Activated CD8-positive, alpha-beta T cell treated with anti-CD3 and anti-CD28 coated beads for 36 hours (primary cell): ENCODE measurements at regions of chr1 and their contacts with region 1.

Region 1: DNA sequence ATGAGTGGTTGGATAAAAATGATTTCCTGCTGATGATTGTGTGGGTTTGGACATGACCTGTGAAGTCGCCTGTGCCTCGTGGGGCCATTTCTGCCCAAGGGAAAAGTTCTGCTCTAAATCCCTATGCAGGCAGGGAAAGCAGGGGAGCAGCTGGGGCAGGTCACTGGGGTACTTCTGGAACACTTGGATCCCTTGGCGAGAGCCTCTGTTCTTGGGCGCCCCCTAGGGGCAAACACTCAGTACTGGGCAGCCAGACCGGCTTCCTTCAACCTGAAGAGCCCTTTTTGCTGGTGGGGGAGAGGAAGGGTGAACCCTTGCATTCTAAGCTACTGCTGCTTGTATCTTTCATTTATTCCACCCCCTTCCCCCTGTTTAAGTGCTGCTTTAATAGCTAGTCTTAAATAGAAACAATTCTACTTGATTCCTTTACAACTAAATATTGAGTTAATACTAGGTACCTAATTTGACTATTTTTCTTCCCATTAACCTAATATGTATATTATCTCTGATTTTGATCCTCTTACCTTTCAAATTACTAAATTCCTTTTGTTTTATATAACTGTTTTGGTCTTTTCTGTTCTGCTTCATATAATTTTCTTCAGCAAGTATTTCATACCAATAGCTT is 5.1 kb upstream of the CLEC20A start:
- DNase-seq: peak; percentile 71
- ATAC-seq: peak; percentile 85
- H3K4me3 Mint-ChIP-seq: no peak overlapping the region
- H3K27ac Mint-ChIP-seq: no peak overlapping the region
- H3K4me1 Mint-ChIP-seq: no peaks in the 10 kb centered on the region
- H3K27me3 Mint-ChIP-seq: no peaks in the 10 kb centered on the region
- CTCF ChIP-seq: peak; percentile 64

Region 2: DNA sequence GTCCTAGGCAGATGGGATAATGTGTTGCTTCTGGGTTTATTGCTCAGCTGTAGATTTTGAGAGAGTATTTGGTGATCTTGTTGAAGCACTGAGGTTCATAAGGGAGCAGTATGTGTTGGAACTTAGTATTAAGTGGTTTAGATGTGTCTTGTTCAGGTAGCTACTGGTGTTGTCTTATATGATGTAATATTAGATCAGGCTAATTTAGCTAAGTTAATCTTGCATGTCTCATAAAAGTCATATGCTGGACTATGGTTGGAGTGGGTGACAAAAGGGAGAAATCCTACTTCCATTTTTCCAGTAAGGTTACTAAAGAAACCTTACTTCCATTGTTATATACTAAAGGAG is 201.5 kb before region 1 on chr1:
- CTCF ChIA-PET with region 1: interaction called, 14 read pairs
- POLR2A ChIA-PET with region 1: no interaction called
- intact Hi-C with region 1: no loop called
- DNase-seq: no peak
- ATAC-seq: no peak
- H3K4me3 Mint-ChIP-seq: no peak overlapping the region
- H3K27ac Mint-ChIP-seq: no peak overlapping the region
- H3K4me1 Mint-ChIP-seq: no peaks in the 10 kb centered on the region
- H3K27me3 Mint-ChIP-seq: peaks cover 2% of the 10 kb centered on the region
- CTCF ChIP-seq: no peak

Region 3: DNA sequence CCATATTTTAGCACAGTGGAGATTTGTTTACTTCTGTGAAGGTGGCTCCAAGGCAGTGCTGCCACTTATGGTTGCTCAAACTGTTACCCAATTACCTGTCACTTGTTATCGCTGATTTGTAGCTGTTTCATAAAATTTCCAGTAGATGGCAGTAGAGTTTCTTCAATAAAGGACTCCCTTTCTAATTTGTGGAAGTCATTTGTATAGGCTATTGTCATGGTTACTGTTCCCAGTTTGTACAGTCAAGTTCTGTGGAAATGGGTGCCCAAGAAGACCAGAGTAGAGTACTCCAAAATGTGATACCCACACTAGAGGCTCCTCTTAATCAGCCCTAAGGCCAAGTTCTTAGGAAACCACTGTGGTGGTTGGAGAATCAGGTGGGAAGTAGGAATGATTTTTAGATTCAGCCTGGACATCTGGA is 191.1 kb before region 1 on chr1:
- CTCF ChIA-PET with region 1: interaction called, 62 read pairs
- POLR2A ChIA-PET with region 1: no interaction called
- intact Hi-C with region 1: loop called (anchors 5 kb)
- DNase-seq: no peak
- ATAC-seq: peak; percentile 51
- H3K4me3 Mint-ChIP-seq: no peak overlapping the region
- H3K27ac Mint-ChIP-seq: no peak overlapping the region
- H3K4me1 Mint-ChIP-seq: no peaks in the 10 kb centered on the region
- H3K27me3 Mint-ChIP-seq: peaks cover 5% of the 10 kb centered on the region
- CTCF ChIP-seq: peak; percentile 67

Region 4: DNA sequence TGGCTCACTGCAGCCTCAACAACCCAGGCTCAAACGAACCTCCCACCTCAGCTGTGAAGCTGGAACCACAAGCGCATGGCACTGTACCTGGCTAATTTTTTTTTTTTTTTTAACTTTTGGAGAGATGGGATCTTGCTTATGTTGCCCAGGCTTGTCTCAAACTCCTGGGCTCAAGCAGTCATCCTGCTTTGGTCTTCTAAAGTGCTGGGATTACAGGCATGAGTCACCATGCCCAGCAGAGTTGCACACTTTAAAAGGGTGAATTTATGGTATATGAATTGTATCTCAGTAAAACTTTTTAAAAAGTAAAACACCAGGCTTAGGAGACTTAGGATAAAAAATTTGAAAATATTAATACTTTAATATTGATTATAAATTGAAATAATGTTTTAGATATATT is 104.1 kb before region 1 on chr1:
- CTCF ChIA-PET with region 1: no interaction called
- POLR2A ChIA-PET with region 1: no interaction called
- intact Hi-C with region 1: no loop called
- DNase-seq: no peak
- ATAC-seq: no peak
- H3K4me3 Mint-ChIP-seq: no peak overlapping the region
- H3K27ac Mint-ChIP-seq: no peak overlapping the region
- H3K4me1 Mint-ChIP-seq: no peaks in the 10 kb centered on the region
- H3K27me3 Mint-ChIP-seq: no peaks in the 10 kb centered on the region
- CTCF ChIP-seq: no peak

Region 5: DNA sequence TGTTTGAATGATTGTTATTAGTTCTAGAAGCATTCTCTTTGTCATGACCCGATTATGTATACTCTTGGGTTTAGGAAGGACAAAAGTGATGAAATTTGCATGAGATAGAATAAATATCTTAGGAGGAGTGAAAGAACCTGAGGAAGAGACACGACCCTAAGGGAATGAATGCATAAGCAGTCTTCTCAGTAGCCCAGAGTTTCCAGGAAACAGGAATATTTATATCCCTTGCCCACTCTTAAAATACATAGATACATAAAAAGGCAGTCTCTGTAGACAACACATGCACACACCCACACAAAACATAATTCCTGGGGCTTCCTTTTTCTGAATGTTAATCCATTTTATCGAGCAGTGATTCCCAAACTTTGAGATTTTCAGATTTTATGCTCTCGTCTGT is 24.4 kb before region 1 on chr1:
- CTCF ChIA-PET with region 1: interaction called, 10 read pairs
- POLR2A ChIA-PET with region 1: interaction called, 3 read pairs
- intact Hi-C with region 1: no loop called
- DNase-seq: no peak
- ATAC-seq: no peak
- H3K4me3 Mint-ChIP-seq: no peak overlapping the region
- H3K27ac Mint-ChIP-seq: no peak overlapping the region
- H3K4me1 Mint-ChIP-seq: no peaks in the 10 kb centered on the region
- H3K27me3 Mint-ChIP-seq: peaks cover 10% of the 10 kb centered on the region
- CTCF ChIP-seq: no peak

Region 6: DNA sequence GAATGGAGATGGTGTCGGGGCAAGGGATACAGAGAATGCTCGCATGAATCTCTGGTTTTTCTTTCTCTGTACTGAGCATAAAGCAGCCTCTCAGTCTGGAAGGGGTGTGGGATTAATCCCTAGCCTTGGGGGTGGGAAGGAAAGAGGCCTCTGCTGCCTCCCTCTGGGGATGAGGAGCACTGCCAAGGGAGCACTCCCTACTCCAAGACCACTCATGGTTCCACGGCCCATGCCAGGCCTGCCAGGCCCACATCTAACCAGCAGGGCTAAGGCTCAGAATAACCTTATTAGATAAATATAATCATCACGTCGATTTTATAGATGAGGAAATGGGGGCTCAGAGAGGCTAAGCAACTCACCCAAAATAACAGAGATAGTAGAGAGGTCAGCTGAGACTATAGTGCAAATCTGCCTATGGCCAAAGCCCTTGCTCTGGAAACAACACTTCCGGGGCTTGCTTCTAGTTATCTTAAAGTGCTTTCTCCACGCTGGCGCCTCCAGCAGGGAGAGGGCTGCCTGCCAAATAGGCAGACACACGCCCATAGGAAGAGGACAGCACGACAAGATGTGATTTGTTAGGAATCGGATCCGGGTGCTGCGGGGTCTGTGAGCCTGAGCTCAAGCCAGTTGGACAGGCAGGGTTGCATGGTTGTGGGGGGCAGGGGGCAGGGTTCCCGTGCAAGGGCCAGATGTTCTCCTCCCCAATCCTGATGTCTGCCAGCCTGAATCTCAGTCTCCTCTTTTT is 11.6 kb after region 1 on chr1:
- CTCF ChIA-PET with region 1: interaction called, 10 read pairs
- POLR2A ChIA-PET with region 1: no interaction called
- intact Hi-C with region 1: no loop called
- DNase-seq: no peak
- ATAC-seq: no peak
- H3K4me3 Mint-ChIP-seq: no peak overlapping the region
- H3K27ac Mint-ChIP-seq: no peak overlapping the region
- H3K4me1 Mint-ChIP-seq: no peaks in the 10 kb centered on the region
- H3K27me3 Mint-ChIP-seq: no peaks in the 10 kb centered on the region
- CTCF ChIP-seq: no peak

Region 7: DNA sequence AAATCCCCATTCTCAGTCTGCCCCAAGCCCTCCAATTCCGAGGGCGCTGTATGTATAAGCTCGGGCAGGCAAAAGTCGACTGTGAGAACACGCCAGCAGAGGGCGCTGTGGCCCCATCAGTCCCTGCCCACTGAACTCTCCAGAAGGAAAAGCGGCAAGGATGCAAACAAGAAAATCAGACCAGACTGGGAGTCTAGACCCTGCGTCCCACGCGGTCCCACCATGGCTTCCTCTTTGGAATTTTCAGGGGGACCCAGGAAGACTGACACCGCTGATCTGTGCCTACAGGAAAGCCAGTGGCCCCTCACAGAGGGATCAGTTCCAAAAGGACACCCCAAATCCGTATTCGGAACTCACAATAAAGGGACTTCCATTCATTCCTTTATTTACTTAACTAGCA is 30.6 kb after region 1 on chr1:
- CTCF ChIA-PET with region 1: interaction called, 11 read pairs
- POLR2A ChIA-PET with region 1: no interaction called
- intact Hi-C with region 1: no loop called
- DNase-seq: peak; percentile 83
- ATAC-seq: peak; percentile 87
- H3K4me3 Mint-ChIP-seq: no peak overlapping the region
- H3K27ac Mint-ChIP-seq: no peak overlapping the region
- H3K4me1 Mint-ChIP-seq: no peaks in the 10 kb centered on the region
- H3K27me3 Mint-ChIP-seq: no peaks in the 10 kb centered on the region
- CTCF ChIP-seq: peak; percentile 86

Region 8: GRCh38 chr1:178796013-178796412 is 294.2 kb after region 1 on chr1:
- CTCF ChIA-PET with region 1: no interaction called
- POLR2A ChIA-PET with region 1: no interaction called
- intact Hi-C with region 1: no loop called
- DNase-seq: no peak
- ATAC-seq: no peak
- H3K4me3 Mint-ChIP-seq: no peak overlapping the region
- H3K27ac Mint-ChIP-seq: no peak overlapping the region
- H3K4me1 Mint-ChIP-seq: no peaks in the 10 kb centered on the region
- H3K27me3 Mint-ChIP-seq: no peaks in the 10 kb centered on the region
- CTCF ChIP-seq: no peak